Endothelial cell of umbilical vein (primary cell): ENCODE measurements at regions of chr7 and their contacts with region 1.

Region 1: DNA sequence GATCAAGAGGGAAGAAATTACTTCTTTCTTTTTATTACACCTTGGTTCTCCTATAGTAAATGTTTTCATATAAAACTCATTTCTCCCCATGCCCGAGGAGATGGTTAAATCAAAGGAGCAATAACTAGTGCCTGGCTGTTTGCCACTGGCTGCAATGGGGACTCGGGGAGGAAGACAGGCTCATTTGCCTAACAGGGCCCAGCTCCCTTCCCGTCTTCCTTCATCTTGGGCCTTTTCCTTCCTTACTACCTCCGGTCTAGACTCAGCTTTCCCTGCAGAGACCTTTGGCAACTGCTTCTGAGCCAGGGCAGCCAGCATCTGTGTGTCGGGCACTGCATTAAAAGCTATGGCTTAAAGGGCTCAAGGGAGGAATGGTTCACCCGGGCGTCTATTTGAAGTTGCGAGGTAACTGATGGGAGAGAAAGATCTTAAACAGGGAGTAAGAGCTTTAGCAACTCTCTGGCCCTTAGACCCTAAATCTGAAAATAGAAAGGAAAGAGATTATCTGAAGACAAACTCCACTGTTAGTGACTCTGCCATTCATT is 63.5 kb downstream of the CALD1 start:
- DNase-seq: peak; percentile 88
- H3K4me3 ChIP-seq: peak overlapping the region in 1 of 3 experiments; percentile 14
- H3K27ac ChIP-seq: peak overlapping the region; percentile 9
- H3K4me1 ChIP-seq: peaks cover 32% of the 10 kb centered on the region
- H3K27me3 ChIP-seq: no peaks in the 10 kb centered on the region
- CTCF ChIP-seq: no peak
- POLR2A ChIP-seq: no peak

Region 2: DNA sequence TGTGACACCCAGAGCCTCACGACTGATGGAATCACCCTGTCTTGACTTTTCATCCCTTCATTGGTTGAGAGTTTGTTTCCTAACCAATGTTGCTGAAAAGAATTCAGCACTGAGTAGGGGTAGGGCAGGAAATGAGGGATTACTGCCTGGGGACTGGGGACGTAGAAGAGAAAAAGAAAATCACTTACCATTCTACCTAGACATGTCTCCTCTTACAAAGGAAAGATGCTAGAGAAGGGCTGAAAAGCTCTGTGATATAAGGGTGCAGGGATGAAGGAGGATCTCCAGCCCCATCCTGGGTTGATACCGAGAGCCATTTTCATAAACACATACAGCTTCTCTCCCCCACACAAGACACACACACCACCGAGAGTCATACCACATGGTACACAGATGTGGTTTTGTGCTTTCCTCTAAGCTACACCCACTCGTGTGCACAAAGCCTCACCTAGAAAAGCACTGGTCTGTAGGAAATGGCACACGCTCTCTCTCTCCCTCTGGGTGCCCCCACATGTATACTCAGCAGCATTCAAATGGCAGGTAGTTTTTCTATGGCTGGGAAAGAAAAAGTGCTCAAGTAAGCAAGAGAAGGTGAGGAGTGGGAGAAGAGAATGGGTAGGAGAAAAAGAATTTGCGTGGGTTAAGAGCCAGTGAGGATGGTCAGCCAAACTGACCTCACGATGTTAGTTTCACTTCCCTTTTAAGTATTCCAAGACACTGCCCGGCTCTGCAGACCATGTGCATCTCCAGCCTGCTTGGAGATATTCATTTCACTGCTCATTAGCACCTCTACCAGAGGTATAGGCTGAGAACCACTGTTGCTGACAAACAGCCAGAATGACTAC is 22.3 kb after region 1 on chr7:
- CTCF ChIA-PET with region 1: no interaction called
- POLR2A ChIA-PET with region 1: no interaction called
- dilution Hi-C with region 1: no loop called
- intact Hi-C with region 1: loop called (anchors 1 kb)
- DNase-seq: no peak
- H3K4me3 ChIP-seq: no peak overlapping the region
- H3K27ac ChIP-seq: peak overlapping the region; percentile 68
- H3K4me1 ChIP-seq: peaks cover 44% of the 10 kb centered on the region
- H3K27me3 ChIP-seq: no peaks in the 10 kb centered on the region
- CTCF ChIP-seq: no peak
- POLR2A ChIP-seq: no peak

Region 3: DNA sequence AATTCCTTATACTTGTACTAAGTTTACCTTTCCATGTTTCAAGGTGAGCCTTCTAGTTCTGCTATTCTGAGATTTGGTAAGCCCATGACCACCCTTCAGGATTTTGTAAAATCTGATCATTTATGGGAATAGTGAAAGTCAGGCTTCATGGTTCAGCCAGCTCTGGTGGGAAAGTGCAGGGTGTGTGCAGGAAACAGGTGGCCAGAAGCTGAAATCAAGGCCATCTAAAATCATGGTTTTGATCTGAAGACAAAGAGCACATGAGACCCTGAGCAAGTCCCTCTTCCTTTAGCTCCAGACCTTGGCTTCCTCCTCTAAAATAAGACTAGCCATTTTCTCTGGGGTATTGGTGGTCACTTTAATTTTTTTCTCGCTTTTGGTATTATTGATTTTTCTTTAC is 27.8 kb after region 1 on chr7:
- CTCF ChIA-PET with region 1: interaction called, 10 read pairs
- POLR2A ChIA-PET with region 1: no interaction called
- dilution Hi-C with region 1: no loop called
- intact Hi-C with region 1: loop called (anchors 1 kb)
- DNase-seq: peak; percentile 58
- H3K4me3 ChIP-seq: no peak overlapping the region
- H3K27ac ChIP-seq: no peak overlapping the region
- H3K4me1 ChIP-seq: peaks cover 55% of the 10 kb centered on the region
- H3K27me3 ChIP-seq: no peaks in the 10 kb centered on the region
- CTCF ChIP-seq: no peak
- POLR2A ChIP-seq: no peak

Region 4: GRCh38 chr7:134943764-134944400 is 100.9 kb after region 1 on chr7:
- CTCF ChIA-PET with region 1: no interaction called
- POLR2A ChIA-PET with region 1: no interaction called
- dilution Hi-C with region 1: no loop called
- intact Hi-C with region 1: no loop called
- DNase-seq: peak; percentile 55
- H3K4me3 ChIP-seq: no peak overlapping the region
- H3K27ac ChIP-seq: no peak overlapping the region
- H3K4me1 ChIP-seq: peaks cover 11% of the 10 kb centered on the region
- H3K27me3 ChIP-seq: no peaks in the 10 kb centered on the region
- CTCF ChIP-seq: peak; percentile 13 to 21
- POLR2A ChIP-seq: no peak

Region 5: DNA sequence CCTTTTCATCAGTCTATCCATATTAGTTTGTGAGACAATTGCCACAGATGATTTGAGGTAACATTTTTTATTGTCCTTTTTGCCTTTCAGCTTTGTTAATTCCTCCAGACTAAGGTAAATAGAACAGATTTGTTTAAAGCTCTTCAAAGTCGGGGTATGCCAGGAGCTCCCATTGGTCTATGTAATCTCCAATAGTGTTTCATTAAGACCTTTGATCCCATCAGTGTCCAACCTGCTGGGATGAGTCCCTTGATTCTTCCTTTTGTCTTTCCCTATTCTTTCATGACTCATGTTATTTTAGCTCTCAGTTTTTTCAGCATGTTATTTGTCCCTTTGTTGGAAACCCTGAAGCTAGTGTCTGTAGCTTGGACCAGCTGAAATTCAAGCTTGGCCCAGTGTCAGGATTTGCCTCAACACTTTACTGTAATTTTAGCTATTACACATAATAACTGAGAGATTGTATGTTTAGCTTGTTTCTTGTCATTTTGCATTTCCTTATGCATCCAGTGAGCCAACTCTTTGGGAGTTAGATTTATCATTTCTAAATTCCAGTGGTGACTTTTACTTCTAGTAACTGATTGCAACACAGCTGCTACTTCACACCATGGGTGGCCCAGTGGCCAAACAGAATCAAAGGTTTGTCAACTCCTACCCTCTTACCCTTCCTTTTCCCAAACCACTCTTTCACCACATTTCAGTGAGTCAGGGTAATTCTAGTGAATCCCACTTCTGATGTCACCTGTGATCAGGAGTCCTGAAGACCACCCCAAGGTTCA is 158.6 kb after region 1 on chr7:
- CTCF ChIA-PET with region 1: no interaction called
- POLR2A ChIA-PET with region 1: no interaction called
- dilution Hi-C with region 1: no loop called
- intact Hi-C with region 1: no loop called
- DNase-seq: no peak
- H3K4me3 ChIP-seq: no peak overlapping the region
- H3K27ac ChIP-seq: no peak overlapping the region
- H3K4me1 ChIP-seq: no peaks in the 10 kb centered on the region
- H3K27me3 ChIP-seq: no peaks in the 10 kb centered on the region
- CTCF ChIP-seq: no peak
- POLR2A ChIP-seq: no peak